Ascending aorta (tissue), 2 donors: ENCODE measurements at regions of chr2 and their contacts with region 1.

Region 1: DNA sequence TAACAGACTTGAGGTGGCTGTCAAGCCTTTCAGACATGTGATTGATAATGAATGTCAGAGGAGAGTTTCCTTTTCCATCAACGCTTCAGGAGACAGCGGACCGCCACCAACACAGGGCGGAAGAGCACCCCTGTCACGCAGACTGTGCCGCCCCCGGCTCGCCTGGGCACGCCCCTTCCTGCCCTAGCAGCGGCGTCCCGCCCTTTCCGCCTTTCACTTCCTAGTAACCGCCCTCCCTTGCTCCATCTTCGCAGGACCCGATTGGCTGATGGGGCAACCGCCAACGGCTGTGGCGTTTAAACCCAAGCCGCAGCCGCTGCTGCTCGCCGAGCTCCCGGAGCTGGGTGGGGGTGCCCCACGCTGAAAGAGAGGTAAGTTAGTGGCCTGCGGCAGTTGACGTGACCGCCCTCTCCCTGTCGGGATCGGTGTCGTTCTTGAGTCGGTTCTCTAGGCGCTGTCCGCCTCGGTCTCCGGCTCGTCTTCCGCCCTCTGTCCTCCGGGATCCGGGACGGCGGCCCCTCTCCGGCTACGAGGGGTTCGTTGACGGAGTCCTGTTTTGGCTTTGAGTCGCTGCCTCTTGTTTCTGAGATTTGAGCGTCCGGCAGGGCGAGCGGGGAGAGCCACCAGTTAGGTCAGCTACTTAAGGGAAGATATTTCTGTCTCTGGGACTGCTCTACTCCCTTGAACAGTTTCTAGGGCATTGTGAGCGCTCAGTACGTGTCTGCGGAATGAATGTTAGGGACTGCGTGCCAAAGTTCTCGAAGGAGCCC is at the start of gene SGO2:
- DNase-seq: peak; percentile 70 to 97
- H3K4me3 ChIP-seq: peak within 1 kb of the TSS; percentile 63 to 69
- H3K27ac ChIP-seq: no peak within 1 kb of the TSS
- H3K4me1 ChIP-seq: peaks cover 0 to 6% of the 10 kb centered on the region in 2 donors
- H3K27me3 ChIP-seq: no peaks in the 10 kb centered on the region
- CTCF ChIP-seq: no peak
- total RNA-seq, gene SGO2: 0.96 TPM

Region 2: GRCh38 chr2:199911052-199911876 is 614.8 kb before region 1 on chr2 and contains the start of gene C2orf69:
- intact Hi-C with region 1: loop called (anchors 2 kb)
- DNase-seq: peak; percentile 80 to 97
- H3K4me3 ChIP-seq: peak within 1 kb of the TSS; percentile 84 to 85
- H3K27ac ChIP-seq: peak within 1 kb of the TSS; percentile 95 to 98
- H3K4me1 ChIP-seq: peaks cover 0 to 16% of the 10 kb centered on the region in 2 donors
- H3K27me3 ChIP-seq: no peaks in the 10 kb centered on the region
- CTCF ChIP-seq: no peak
- total RNA-seq, gene C2orf69: 1.9 TPM

Region 3: DNA sequence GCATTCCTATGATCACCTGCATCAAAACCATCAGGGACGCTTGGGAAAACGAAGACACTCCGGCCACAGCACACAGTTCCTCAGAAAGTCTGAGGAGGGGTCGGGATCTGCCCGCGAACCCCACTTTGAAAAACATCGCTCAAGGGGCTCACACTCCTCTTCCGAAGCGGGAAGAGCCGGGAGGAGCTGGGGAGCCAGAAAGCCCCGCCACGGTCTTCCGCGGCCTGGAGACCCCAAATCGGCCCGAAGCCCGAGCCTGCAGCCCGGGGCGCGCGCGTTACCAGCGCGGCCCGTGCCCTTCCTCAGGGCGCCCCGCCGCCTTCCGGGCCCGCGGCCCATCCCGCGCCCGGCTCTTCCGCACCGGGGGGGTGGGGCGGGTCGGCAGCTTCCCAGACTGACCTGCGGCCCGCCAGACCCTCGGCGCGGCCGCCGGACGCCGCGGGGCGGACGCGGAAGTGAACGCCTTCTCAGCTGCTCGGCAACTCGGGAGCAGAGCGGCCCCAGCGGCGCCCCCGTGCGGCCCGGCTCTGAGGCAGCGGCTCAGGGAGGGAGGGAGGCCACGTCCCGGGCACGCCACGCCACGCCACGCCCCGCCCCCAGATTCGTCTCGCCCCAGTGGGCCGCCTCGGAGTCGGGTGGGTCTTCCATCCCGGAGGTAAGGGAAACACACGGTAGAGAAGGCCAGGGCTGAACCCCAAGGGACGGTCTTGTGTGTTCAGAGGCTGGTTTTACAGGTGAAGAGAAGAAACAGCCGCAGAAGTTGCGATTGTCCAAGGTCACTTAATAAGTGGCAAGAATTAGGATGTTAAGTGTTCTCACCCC is 16.2 kb before region 1 on chr2 and contains the start of gene KCTD18:
- intact Hi-C with region 1: loop called (anchors 2 kb)
- DNase-seq: peak; percentile 55 to 94
- H3K4me3 ChIP-seq: peak within 1 kb of the TSS; percentile 55 to 87
- H3K27ac ChIP-seq: peak within 1 kb of the TSS; percentile 80 to 82
- H3K4me1 ChIP-seq: peaks cover 0 to 12% of the 10 kb centered on the region in 2 donors
- H3K27me3 ChIP-seq: no peaks in the 10 kb centered on the region
- CTCF ChIP-seq: peak; percentile 70 to 88 (median 86)
- total RNA-seq, gene KCTD18: 17.9 TPM

Region 4: DNA sequence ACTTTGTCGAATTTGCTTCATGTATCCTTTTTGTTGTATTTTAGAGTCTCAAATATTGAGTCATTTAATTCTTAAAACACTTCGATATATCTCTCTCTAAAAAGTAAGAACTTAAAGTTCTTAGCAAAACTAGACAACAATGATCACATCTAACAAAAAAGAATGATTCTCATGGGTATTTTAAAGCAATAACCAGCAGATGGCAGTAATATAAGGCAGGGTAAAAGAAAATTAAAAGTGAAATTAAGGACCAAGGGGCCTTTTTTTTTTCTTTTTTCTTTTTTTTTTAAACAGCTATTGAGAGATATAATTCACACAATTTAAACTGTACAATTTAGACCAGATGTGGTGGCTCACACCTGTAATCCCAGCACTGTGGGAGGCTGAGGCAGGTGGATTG is 49.9 kb after region 1 on chr2:
- intact Hi-C with region 1: no loop called
- DNase-seq: no peak
- H3K4me3 ChIP-seq: no peak overlapping the region
- H3K27ac ChIP-seq: no peak overlapping the region
- H3K4me1 ChIP-seq: no peaks in the 10 kb centered on the region
- H3K27me3 ChIP-seq: no peaks in the 10 kb centered on the region
- CTCF ChIP-seq: peak in 2 of 3 experiments; percentile 20 to 43

Region 5: GRCh38 chr2:200850512-200851256 is 324.6 kb after region 1 on chr2:
- intact Hi-C with region 1: no loop called
- DNase-seq: no peak
- H3K4me3 ChIP-seq: no peak overlapping the region
- H3K27ac ChIP-seq: no peak overlapping the region
- H3K4me1 ChIP-seq: no peaks in the 10 kb centered on the region
- H3K27me3 ChIP-seq: no peaks in the 10 kb centered on the region
- CTCF ChIP-seq: no peak